PC-9 (cell line): ENCODE measurements at regions of chr4 and their contacts with region 1.

Region 1: DNA sequence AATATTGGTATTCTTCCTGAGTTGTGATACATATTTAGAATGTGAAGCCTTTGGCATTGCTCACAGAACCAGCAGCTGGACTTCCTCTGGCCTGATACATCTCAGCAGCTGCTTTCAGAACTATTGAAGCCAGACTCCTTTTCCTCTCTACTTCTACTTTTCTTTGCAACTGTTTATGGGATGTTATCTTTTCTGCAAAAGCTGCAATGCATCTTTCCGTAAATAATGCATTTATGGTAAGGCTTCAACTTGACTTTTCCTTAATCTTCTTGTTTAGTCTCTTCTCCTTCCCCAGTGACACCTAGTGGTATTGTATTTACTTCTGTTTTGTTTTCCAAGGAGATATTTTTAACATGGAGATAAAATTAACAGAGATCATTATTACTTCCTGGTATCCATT is 1548.7 kb downstream of the PCDH7 start:
- DNase-seq: no peak
- H3K4me3 ChIP-seq: no peak overlapping the region
- H3K27ac ChIP-seq: no peak overlapping the region
- H3K4me1 ChIP-seq: no peaks in the 10 kb centered on the region
- H3K27me3 ChIP-seq: no peaks in the 10 kb centered on the region
- CTCF ChIP-seq: no peak

Region 2: GRCh38 chr4:32073542-32073941 is 195.3 kb before region 1 on chr4:
- CTCF ChIA-PET with region 1: no interaction called
- POLR2A ChIA-PET with region 1: no interaction called
- intact Hi-C with region 1: no loop called
- DNase-seq: no peak
- H3K4me3 ChIP-seq: no peak overlapping the region
- H3K27ac ChIP-seq: no peak overlapping the region
- H3K4me1 ChIP-seq: no peaks in the 10 kb centered on the region
- H3K27me3 ChIP-seq: no peaks in the 10 kb centered on the region
- CTCF ChIP-seq: no peak

Region 3: DNA sequence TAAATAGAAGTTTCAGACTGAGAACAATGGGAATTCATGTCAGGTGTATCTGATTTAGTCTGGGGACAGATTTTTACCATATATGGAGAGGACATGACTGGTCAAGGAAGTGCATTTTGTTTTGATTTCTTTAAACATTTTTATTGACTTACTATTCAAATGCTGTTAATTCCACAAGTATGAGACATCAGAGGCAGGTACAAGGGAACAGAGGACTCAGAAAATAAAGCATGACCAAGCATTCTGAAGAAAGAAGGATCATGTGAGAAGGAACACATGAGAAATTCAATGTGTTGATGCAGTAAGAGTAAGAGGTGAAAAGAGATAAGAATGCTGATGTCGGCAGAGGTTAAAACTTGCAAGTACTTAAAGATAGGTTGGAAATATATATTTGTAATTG is 96.1 kb before region 1 on chr4:
- CTCF ChIA-PET with region 1: no interaction called
- POLR2A ChIA-PET with region 1: no interaction called
- intact Hi-C with region 1: no loop called
- DNase-seq: peak in 1 of 2 experiments; percentile 74
- H3K4me3 ChIP-seq: no peak overlapping the region
- H3K27ac ChIP-seq: peak overlapping the region; percentile 59
- H3K4me1 ChIP-seq: 0 out of 2 replicates have a peak, but pooled peaks cover 5% of the 10 kb centered on the region
- H3K27me3 ChIP-seq: no peaks in the 10 kb centered on the region
- CTCF ChIP-seq: no peak

Region 4: DNA sequence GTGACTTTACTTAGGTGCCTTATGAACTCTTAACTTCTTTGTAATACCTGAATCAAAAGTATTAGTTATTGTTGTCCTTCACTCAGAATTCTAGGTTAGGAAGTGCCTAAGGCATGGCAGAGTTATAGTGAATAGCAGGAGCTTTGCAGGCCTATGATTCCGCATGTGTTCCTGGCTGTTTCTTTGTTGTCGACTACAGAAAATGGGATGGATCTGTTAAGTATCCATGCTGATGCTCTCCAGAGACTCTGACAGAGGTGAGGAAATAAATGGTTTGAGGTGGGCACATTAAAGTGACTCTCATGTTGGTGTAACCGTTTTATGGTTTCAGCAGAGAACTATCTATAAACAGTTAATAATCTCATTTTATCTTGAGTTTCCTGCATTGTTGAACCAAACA is 52.6 kb after region 1 on chr4:
- CTCF ChIA-PET with region 1: no interaction called
- POLR2A ChIA-PET with region 1: no interaction called
- intact Hi-C with region 1: loop called (anchors 2 kb)
- DNase-seq: no peak
- H3K4me3 ChIP-seq: no peak overlapping the region
- H3K27ac ChIP-seq: no peak overlapping the region
- H3K4me1 ChIP-seq: no peaks in the 10 kb centered on the region
- H3K27me3 ChIP-seq: no peaks in the 10 kb centered on the region
- CTCF ChIP-seq: no peak